ENCODE measurements at regions of chr7 and their contacts with region 1.

Region 1: GRCh38 chr7:131945313-131945911 is 389.0 kb upstream of the PODXL start:
- DNase-seq: peak; percentile 93
- H3K4me3 ChIP-seq: peak overlapping the region; percentile 23 to 37
- H3K27ac ChIP-seq: peak overlapping the region in 1 of 2 experiments; percentile 31; a peak in 1 of 4 replicates
- H3K4me1 ChIP-seq: peaks cover 13 to 31% of the 10 kb centered on the region in 2 experiments; a peak in 3 of 4 replicates
- H3K27me3 ChIP-seq: no peaks in the 10 kb centered on the region
- CTCF ChIP-seq: peak; percentile 97
- EP300 ChIP-seq: no peak; a peak in 1 of 4 replicates
- RAD21 ChIP-seq: peak; percentile 95

Region 2: GRCh38 chr7:131786204-131786603 is 159.2 kb before region 1 on chr7:
- CTCF ChIA-PET with region 1: no interaction called
- POLR2A ChIA-PET with region 1: no interaction called
- DNase-seq: no peak
- H3K4me3 ChIP-seq: no peak overlapping the region
- H3K27ac ChIP-seq: no peak overlapping the region
- H3K4me1 ChIP-seq: no peaks in the 10 kb centered on the region
- H3K27me3 ChIP-seq: no peaks in the 10 kb centered on the region
- CTCF ChIP-seq: no peak
- EP300 ChIP-seq: no peak
- RAD21 ChIP-seq: no peak

Region 3: DNA sequence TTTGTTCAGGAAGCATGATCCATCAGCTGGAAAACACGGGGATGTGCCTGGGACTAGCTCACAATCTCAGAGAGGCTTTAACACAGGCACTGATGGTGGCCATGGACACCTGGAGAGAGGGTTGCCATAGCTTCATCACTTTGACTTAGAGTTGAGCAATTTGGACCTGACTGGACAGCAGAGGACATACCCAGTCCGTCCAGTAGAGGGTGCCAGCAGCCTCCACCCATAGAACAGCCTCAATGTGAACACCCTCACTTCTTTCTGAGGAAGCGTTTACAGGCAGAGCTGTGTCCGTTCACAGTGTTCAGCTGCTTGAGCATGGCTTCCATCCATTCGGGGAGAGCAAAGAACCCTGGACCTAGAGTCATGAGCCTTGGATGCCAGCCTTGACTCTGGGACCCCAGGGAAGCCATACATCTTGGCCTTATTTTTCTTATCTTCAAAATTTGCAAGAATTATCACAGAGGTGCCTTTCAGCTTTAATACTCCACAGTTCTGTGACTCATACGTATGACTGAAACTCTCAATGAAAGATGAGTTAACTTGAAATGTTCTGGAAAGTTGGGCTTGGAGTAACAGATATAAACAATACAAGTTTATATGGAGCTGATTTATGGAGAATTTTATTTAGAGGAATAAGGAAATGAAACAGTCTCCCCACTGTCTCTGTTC is 86.1 kb before region 1 on chr7:
- CTCF ChIA-PET with region 1: interaction called, 11 read pairs
- POLR2A ChIA-PET with region 1: no interaction called
- DNase-seq: peak; percentile 80
- H3K4me3 ChIP-seq: peak overlapping the region in 1 of 2 experiments; percentile 15; a peak in 1 of 4 replicates
- H3K27ac ChIP-seq: peak overlapping the region in 1 of 2 experiments; percentile 76; a peak in 3 of 4 replicates
- H3K4me1 ChIP-seq: peaks cover 7 to 30% of the 10 kb centered on the region in 2 experiments; a peak in 3 of 4 replicates
- H3K27me3 ChIP-seq: no peaks in the 10 kb centered on the region
- CTCF ChIP-seq: peak; percentile 99
- EP300 ChIP-seq: no peak
- RAD21 ChIP-seq: peak; percentile 86

Region 4: DNA sequence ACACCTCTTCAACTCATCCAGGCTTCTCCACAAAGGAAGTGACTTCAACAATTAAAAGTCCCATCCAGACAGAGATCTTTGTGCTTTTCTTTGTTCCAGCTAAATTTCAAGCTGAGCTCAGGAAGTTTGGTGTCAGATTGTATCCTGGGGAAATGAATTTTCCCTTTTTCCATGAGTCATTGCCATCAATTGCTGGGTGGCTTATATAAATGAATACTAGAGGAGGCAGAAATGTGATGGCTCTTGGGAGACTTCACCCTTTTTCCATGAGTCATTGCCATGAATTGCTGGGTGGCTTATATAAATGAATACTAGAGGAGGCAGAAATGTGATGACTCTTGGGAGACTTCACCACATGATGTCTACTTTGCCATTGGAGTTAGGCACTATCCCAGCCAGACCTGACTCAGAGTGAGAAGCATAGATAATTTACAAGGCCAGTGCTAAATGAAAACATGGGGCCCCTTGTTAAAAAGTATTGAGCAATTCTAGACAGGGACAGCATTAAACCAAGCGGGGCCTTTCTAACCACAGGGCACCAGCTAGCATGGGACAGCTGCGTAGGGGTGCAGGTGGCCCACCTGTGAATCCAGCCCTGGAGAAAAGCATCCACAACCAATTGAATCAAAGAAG is 49.8 kb before region 1 on chr7:
- CTCF ChIA-PET with region 1: no interaction called
- POLR2A ChIA-PET with region 1: no interaction called
- DNase-seq: no peak
- H3K4me3 ChIP-seq: 0 out of 4 replicates have a peak overlapping the region, but pooled peaks of 1 of the 2 experiments have one; percentile 49
- H3K27ac ChIP-seq: peak overlapping the region; percentile 64 to 100; a peak in 3 of 4 replicates
- H3K4me1 ChIP-seq: peaks cover 14 to 50% of the 10 kb centered on the region in 2 experiments; a peak in 3 of 4 replicates
- H3K27me3 ChIP-seq: no peaks in the 10 kb centered on the region
- CTCF ChIP-seq: no peak
- EP300 ChIP-seq: peak; percentile 74 to 100
- RAD21 ChIP-seq: no peak

Region 5: DNA sequence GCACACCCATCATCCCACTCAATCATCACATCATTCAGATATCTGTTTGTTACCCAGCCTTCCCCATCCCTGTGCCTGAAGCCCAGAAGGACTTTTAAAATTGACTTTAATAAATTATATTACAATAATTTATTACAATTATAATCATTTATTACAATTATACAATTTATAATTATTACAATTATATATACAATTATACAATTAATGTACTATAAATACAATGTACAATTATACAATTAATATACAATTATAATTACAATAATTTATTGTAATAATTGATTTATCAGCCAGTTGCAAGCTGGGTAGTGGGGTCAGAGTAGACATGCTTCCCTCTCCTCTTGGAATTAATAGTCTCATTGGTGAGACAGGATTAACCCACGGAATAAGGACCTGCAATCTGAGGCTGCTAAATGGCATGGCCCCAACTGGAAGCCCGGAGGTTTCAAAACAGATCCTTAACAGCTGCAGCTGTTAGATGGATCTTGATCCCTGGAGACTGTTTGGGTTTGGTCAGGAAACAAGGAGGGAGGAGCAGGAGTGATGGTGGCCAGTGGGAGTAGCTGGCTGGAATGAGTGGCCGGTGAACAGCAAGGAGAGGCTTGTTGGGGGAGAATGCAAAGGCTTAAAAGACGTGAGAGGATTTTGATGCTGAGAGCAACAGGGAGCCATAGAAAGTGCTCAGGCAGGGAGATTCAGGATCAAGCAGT is 13.8 kb after region 1 on chr7:
- CTCF ChIA-PET with region 1: interaction called, 60 read pairs
- POLR2A ChIA-PET with region 1: no interaction called
- DNase-seq: no peak
- H3K4me3 ChIP-seq: no peak overlapping the region
- H3K27ac ChIP-seq: no peak overlapping the region
- H3K4me1 ChIP-seq: peaks cover 0 to 2% of the 10 kb centered on the region in 2 experiments; a peak in 1 of 4 replicates
- H3K27me3 ChIP-seq: no peaks in the 10 kb centered on the region
- CTCF ChIP-seq: no peak
- EP300 ChIP-seq: no peak
- RAD21 ChIP-seq: no peak

Region 6: DNA sequence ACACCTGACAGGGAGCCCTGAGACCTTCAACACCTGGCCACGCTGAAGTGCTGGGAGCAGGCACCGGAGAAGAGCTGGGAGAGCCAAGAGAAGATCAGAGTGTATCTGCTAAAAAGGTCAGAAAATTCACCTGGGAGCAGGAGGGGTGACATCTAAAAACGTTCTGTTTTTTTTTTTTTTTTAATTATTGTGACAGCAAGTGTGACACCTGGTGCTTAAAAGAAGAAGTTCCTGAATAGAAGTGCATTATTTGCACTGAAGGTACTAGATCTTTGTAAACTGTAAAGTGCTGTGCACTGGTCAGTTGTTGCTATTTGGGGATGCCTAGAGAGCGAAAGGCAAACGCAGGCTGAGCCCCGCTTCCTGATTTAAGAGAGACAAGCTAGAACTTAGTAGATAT is 208.8 kb after region 1 on chr7:
- CTCF ChIA-PET with region 1: interaction called, 22 read pairs
- POLR2A ChIA-PET with region 1: no interaction called
- DNase-seq: no peak
- H3K4me3 ChIP-seq: no peak overlapping the region
- H3K27ac ChIP-seq: peak overlapping the region in 1 of 2 experiments; percentile 87; a peak in 2 of 4 replicates
- H3K4me1 ChIP-seq: peaks cover 0 to 34% of the 10 kb centered on the region in 2 experiments; a peak in 2 of 4 replicates
- H3K27me3 ChIP-seq: no peaks in the 10 kb centered on the region
- CTCF ChIP-seq: peak; percentile 45
- EP300 ChIP-seq: no peak
- RAD21 ChIP-seq: no peak; the same call in 1 of the 2 replicates

Region 7: GRCh38 chr7:132249614-132249972 is 304.2 kb after region 1 on chr7:
- CTCF ChIA-PET with region 1: interaction called, 39 read pairs
- POLR2A ChIA-PET with region 1: interaction called, 3 read pairs
- DNase-seq: peak; percentile 40
- H3K4me3 ChIP-seq: no peak overlapping the region
- H3K27ac ChIP-seq: no peak overlapping the region
- H3K4me1 ChIP-seq: peaks cover 0 to 5% of the 10 kb centered on the region in 2 experiments; a peak in 1 of 4 replicates
- H3K27me3 ChIP-seq: no peaks in the 10 kb centered on the region
- CTCF ChIP-seq: peak; percentile 42
- EP300 ChIP-seq: no peak
- RAD21 ChIP-seq: peak; percentile 60

Region 8: DNA sequence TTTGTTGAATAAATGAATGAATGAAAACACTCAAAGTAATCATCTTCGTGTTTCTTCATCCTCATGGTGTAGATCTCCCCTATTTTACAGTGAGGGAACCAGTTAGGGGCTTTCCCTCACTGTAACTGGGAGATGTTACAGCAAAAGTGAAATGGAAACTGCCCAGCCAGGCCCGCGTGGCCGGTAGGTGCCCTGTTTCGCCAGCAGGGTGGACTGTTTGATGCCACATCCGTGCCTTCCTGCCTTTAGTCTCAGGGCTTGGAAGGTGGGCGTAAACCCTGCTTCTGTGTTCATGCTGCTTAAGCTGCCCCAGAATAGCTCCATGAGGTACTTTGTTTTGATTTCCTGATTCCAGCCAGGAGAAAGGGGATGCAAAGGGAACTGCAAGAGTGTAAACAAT is 362.1 kb after region 1 on chr7:
- CTCF ChIA-PET with region 1: interaction called, 15 read pairs
- POLR2A ChIA-PET with region 1: no interaction called
- DNase-seq: peak; percentile 44
- H3K4me3 ChIP-seq: no peak overlapping the region
- H3K27ac ChIP-seq: no peak overlapping the region
- H3K4me1 ChIP-seq: peaks cover 0 to 17% of the 10 kb centered on the region in 2 experiments; a peak in 1 of 4 replicates
- H3K27me3 ChIP-seq: no peaks in the 10 kb centered on the region
- CTCF ChIP-seq: peak; percentile 37
- EP300 ChIP-seq: no peak
- RAD21 ChIP-seq: peak; percentile 18; the same call in 1 of the 2 replicates